Endothelial cell of umbilical vein (primary cell): ENCODE measurements at regions of chr12 and their contacts with region 1.

Region 1: DNA sequence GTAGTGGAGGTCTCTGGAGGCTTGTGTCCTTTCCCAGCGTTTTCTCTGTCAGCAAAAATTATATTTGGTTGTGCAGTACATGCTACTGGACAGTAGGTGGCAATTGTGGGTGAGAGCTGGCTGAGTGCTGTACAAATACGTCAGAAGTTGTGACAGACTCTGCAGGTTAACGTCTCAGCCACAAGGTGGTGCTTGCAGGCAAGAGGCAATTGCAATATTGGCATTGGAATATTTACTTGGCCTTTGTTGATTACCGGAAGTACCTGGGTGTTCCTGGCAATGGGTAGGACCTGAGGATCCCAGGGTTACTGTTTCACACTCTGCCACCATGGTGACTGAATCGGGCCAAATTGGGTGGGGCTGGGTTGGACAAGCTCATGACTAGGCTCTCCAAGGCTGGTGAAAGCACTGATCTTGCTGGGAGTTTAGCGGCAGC is 333.9 kb upstream of the LMO3 start:
- DNase-seq: peak; percentile 4
- H3K4me3 ChIP-seq: no peak overlapping the region
- H3K27ac ChIP-seq: no peak overlapping the region
- H3K4me1 ChIP-seq: no peaks in the 10 kb centered on the region
- H3K27me3 ChIP-seq: no peaks in the 10 kb centered on the region
- CTCF ChIP-seq: peak; percentile 50 to 70
- POLR2A ChIP-seq: no peak

Region 2: GRCh38 chr12:17016116-17016864 is 76.4 kb after region 1 on chr12:
- CTCF ChIA-PET with region 1: no interaction called
- POLR2A ChIA-PET with region 1: no interaction called
- dilution Hi-C with region 1: no loop called
- intact Hi-C with region 1: no loop called
- DNase-seq: no peak
- H3K4me3 ChIP-seq: no peak overlapping the region
- H3K27ac ChIP-seq: no peak overlapping the region
- H3K4me1 ChIP-seq: no peaks in the 10 kb centered on the region
- H3K27me3 ChIP-seq: no peaks in the 10 kb centered on the region
- CTCF ChIP-seq: no peak
- POLR2A ChIP-seq: no peak

Region 3: DNA sequence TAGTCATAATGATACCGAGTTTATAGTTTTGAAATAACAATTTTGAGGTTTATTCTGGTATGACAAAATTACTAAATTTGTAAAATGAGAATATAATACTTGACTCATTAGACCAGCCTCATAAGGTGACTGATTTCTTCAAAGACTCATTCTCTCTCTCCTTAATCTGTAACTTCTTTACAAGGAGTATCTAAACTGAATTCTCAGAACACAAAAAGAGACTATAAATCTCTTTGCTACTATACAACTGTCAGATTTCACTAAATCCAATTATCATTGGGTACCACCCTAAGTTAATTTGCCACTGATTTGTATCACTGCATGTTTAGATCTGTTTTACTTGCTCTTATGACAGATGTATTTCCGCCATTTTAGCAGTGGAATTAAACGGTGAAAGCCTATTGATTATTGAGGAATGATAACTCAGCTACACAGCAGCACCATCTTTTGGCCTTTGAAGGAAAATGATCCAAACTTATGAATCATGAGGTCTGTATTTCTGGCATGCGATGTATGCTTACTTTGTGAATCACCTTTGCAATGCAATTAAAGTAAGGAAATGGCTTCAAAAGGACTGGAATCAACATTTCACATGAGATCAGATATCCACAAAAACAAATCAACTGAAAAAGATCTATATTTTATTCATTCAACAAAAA is 988.9 kb after region 1 on chr12:
- CTCF ChIA-PET with region 1: interaction called, 3 read pairs
- POLR2A ChIA-PET with region 1: no interaction called
- dilution Hi-C with region 1: no loop called
- intact Hi-C with region 1: loop called (anchors 1 kb)
- DNase-seq: peak; percentile 90
- H3K4me3 ChIP-seq: peak overlapping the region in 1 of 3 experiments; percentile 48
- H3K27ac ChIP-seq: peak overlapping the region; percentile 90
- H3K4me1 ChIP-seq: peaks cover 23% of the 10 kb centered on the region
- H3K27me3 ChIP-seq: no peaks in the 10 kb centered on the region
- CTCF ChIP-seq: peak in 1 of 2 donors; percentile 19
- POLR2A ChIP-seq: no peak

Region 4: DNA sequence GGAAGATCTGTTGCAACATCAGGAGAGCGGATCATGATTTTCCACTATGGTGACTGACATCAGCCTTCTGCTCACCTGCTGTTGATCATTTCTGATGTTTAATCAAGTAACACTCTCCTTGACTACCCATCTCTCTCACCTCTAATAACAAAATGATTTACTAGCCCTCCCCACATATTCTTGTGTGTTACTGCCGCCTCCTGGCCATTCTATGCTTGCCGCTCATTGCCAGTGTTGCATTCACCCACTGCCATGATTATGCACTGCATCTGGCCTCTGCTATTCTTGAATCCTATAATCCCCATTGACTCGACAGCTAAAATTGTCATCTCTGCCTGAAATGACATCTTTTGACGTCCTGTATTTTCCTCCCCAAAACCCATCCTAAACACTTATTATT is 1036.3 kb after region 1 on chr12:
- CTCF ChIA-PET with region 1: interaction called, 8 read pairs
- POLR2A ChIA-PET with region 1: no interaction called
- dilution Hi-C with region 1: no loop called
- intact Hi-C with region 1: loop called (anchors 1 kb)
- DNase-seq: peak; percentile 28
- H3K4me3 ChIP-seq: no peak overlapping the region
- H3K27ac ChIP-seq: no peak overlapping the region
- H3K4me1 ChIP-seq: no peaks in the 10 kb centered on the region
- H3K27me3 ChIP-seq: no peaks in the 10 kb centered on the region
- CTCF ChIP-seq: peak; percentile 32 to 40
- POLR2A ChIP-seq: no peak